CD4-positive, alpha-beta T cell (primary cell): ENCODE measurements at regions of chr10 and their contacts with region 1.

Region 1: DNA sequence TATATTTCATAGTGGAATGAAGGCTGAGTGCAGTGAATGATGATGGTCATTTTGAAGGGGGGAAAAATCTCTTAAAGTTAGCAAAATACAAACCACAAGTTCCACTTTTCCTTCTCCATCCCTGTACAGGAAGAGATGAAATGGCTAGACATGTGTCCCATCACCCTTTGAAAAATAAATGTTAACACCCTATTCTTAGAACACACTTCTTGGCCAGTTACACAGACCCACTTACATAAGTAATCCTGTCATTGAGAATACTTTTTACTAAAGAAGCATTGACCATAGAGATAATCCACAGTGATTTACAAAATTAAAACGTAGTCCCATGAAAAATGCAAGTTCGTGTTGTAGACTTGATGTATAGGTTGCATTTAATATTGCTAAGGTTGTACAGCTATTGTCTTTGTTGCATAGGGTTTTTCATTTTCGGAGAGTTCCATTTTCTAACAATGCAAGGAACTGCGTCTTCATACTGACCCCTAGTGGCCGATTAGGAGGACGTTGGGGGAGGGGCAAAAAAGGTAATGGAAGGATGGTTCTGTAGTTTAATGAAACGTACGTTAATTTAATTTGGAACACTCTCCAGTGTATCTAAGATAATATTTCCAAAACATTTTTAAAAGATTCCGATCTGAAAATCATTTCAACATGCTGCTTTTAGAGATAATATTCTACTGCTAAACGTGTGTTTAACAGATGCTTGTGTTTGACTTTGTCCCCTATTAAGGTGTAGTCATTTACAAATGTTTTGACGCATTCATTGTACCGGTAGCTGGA is 60.9 kb downstream of the ARMC3 start:
- DNase-seq: peak; percentile 44 to 87 (median 62)
- ATAC-seq: peak; percentile 81
- H3K4me3 ChIP-seq: no peak overlapping the region
- H3K4me3 Mint-ChIP-seq: no peak overlapping the region
- H3K27ac ChIP-seq: no peak overlapping the region
- H3K27ac Mint-ChIP-seq: no peak overlapping the region
- H3K4me1 ChIP-seq: no peaks in the 10 kb centered on the region
- H3K4me1 Mint-ChIP-seq: peaks cover 13% of the 10 kb centered on the region
- H3K27me3 ChIP-seq: no peaks in the 10 kb centered on the region
- H3K27me3 Mint-ChIP-seq: no peaks in the 10 kb centered on the region
- CTCF ChIP-seq: peak; percentile 95

Region 2: GRCh38 chr10:21989453-21990154 is 999.2 kb before region 1 on chr10:
- CTCF ChIA-PET with region 1: interaction called, 9 read pairs
- POLR2A ChIA-PET with region 1: interaction called, 3 read pairs
- intact Hi-C with region 1: loop called (anchors 1 to 2 kb)
- DNase-seq: peak in 9 of 14 experiments; percentile 3 to 67 (median 19)
- ATAC-seq: peak; percentile 87
- H3K4me3 ChIP-seq: no peak overlapping the region
- H3K4me3 Mint-ChIP-seq: no peak overlapping the region
- H3K27ac ChIP-seq: no peak overlapping the region
- H3K27ac Mint-ChIP-seq: no peak overlapping the region
- H3K4me1 ChIP-seq: peaks cover 3% of the 10 kb centered on the region
- H3K4me1 Mint-ChIP-seq: peaks cover 10% of the 10 kb centered on the region
- H3K27me3 ChIP-seq: no peaks in the 10 kb centered on the region
- H3K27me3 Mint-ChIP-seq: no peaks in the 10 kb centered on the region
- CTCF ChIP-seq: peak; percentile 57

Region 3: DNA sequence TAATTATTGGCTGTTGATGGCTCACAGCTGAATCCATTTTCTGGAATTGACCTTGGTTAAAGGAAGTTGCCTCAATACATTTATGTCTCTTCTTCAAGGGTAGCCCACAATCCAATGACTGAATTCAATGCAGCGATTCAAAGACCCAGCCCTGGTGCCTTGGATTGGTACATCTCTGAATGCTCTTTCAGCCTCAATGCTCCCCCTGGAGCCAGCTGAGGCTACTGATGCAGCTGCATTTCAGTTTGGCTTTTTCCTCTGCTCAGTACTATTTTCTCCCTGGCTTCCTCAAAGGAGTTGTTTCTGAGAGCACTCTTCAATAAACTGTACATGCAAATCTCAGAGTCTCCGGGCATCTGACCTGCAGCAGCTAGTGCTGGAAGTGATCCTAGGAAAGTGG is 770.3 kb before region 1 on chr10:
- CTCF ChIA-PET with region 1: no interaction called
- POLR2A ChIA-PET with region 1: no interaction called
- intact Hi-C with region 1: loop called in 1 of 2 experiments (anchors 10 kb)
- DNase-seq: no peak
- ATAC-seq: no peak
- H3K4me3 ChIP-seq: no peak overlapping the region
- H3K4me3 Mint-ChIP-seq: no peak overlapping the region
- H3K27ac ChIP-seq: no peak overlapping the region
- H3K27ac Mint-ChIP-seq: no peak overlapping the region
- H3K4me1 ChIP-seq: no peaks in the 10 kb centered on the region
- H3K4me1 Mint-ChIP-seq: no peaks in the 10 kb centered on the region
- H3K27me3 ChIP-seq: no peaks in the 10 kb centered on the region
- H3K27me3 Mint-ChIP-seq: peaks cover 18% of the 10 kb centered on the region
- CTCF ChIP-seq: no peak

Region 4: GRCh38 chr10:22251751-22252223 is 737.0 kb before region 1 on chr10:
- CTCF ChIA-PET with region 1: no interaction called
- POLR2A ChIA-PET with region 1: no interaction called
- intact Hi-C with region 1: loop called in 1 of 2 experiments (anchors 10 kb)
- DNase-seq: peak; percentile 46 to 82 (median 66)
- ATAC-seq: peak; percentile 57
- H3K4me3 ChIP-seq: peak overlapping the region; percentile 76
- H3K4me3 Mint-ChIP-seq: peak overlapping the region; percentile 96
- H3K27ac ChIP-seq: peak overlapping the region; percentile 71 to 76
- H3K27ac Mint-ChIP-seq: peak overlapping the region; percentile 97
- H3K4me1 ChIP-seq: peaks cover 10% of the 10 kb centered on the region
- H3K4me1 Mint-ChIP-seq: peaks cover 56% of the 10 kb centered on the region
- H3K27me3 ChIP-seq: peaks cover 0 to 7% of the 10 kb centered on the region in 2 experiments
- H3K27me3 Mint-ChIP-seq: peaks cover 22% of the 10 kb centered on the region
- CTCF ChIP-seq: no peak

Region 5: GRCh38 chr10:22550732-22551131 is 438.0 kb before region 1 on chr10:
- CTCF ChIA-PET with region 1: interaction called, 6 read pairs
- POLR2A ChIA-PET with region 1: no interaction called
- intact Hi-C with region 1: loop called (anchors 1 to 2 kb)
- DNase-seq: peak; percentile 59 to 84 (median 68)
- ATAC-seq: peak; percentile 73
- H3K4me3 ChIP-seq: no peak overlapping the region
- H3K4me3 Mint-ChIP-seq: no peak overlapping the region
- H3K27ac ChIP-seq: no peak overlapping the region
- H3K27ac Mint-ChIP-seq: peak overlapping the region; percentile 2
- H3K4me1 ChIP-seq: no peaks in the 10 kb centered on the region
- H3K4me1 Mint-ChIP-seq: peaks cover 5% of the 10 kb centered on the region
- H3K27me3 ChIP-seq: no peaks in the 10 kb centered on the region
- H3K27me3 Mint-ChIP-seq: no peaks in the 10 kb centered on the region
- CTCF ChIP-seq: peak; percentile 81